ENCODE measurements at regions of chr13 and their contacts with region 1.

Region 1: DNA sequence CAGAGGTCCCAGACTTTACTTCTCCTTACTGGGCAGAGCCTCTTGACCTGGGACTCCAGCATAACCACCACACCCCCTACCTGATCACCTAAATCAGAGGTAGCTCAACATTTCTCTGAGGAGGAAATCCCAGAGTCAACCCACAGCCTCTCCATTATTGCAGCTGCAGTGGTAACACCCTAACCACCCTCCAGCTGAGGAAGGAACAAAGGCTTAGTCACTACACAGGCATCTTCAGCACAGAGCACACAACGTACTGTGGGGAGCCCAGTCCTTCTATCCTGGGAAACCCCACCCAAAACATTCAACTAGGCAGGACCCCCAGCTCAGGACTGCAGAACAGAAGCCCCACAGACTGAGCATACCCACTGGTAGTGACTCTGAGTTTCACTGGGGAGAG is 824.7 kb upstream of the SLITRK5 start:
- DNase-seq: no peak
- ATAC-seq: no peak
- H3K4me3 ChIP-seq: no peak overlapping the region
- H3K27ac ChIP-seq: no peak overlapping the region
- H3K4me1 ChIP-seq: no peaks in the 10 kb centered on the region
- H3K27me3 ChIP-seq: no peaks in the 10 kb centered on the region
- CTCF ChIP-seq: no peak
- EP300 ChIP-seq: no peak
- POLR2A ChIP-seq: no peak
- RAD21 ChIP-seq: no peak

Region 2: DNA sequence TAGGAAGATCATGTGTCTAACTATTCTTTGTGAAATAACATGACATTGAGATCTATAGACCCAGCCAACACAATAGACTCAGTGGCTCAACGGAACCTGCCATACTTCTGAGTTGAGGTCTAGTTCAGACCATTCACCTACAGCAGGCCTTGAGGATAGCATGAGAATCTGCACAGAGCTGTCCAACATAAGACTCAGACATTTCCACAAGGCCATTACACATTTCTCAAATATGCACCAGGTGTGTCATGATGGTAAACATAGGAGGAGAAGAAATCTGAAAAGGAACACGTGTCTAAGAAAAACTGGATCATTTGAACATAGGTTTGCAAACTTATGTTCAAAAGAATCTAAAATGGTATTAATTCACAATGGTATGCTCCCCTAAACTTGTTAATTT is 1468.7 kb before region 1 on chr13:
- CTCF ChIA-PET with region 1: no interaction called
- POLR2A ChIA-PET with region 1: interaction called, 10 read pairs
- RAD21 ChIA-PET with region 1: no interaction called
- SMC1A ChIA-PET with region 1: no interaction called
- in situ Hi-C with region 1: no loop called
- intact Hi-C with region 1: no loop called
- DNase-seq: no peak
- ATAC-seq: no peak
- H3K4me3 ChIP-seq: no peak overlapping the region
- H3K27ac ChIP-seq: no peak overlapping the region
- H3K4me1 ChIP-seq: no peaks in the 10 kb centered on the region
- H3K27me3 ChIP-seq: no peaks in the 10 kb centered on the region
- CTCF ChIP-seq: no peak
- EP300 ChIP-seq: no peak
- POLR2A ChIP-seq: no peak
- RAD21 ChIP-seq: no peak